PC-9 (cell line): ENCODE measurements at regions of chr22 and their contacts with region 1.

Region 1: DNA sequence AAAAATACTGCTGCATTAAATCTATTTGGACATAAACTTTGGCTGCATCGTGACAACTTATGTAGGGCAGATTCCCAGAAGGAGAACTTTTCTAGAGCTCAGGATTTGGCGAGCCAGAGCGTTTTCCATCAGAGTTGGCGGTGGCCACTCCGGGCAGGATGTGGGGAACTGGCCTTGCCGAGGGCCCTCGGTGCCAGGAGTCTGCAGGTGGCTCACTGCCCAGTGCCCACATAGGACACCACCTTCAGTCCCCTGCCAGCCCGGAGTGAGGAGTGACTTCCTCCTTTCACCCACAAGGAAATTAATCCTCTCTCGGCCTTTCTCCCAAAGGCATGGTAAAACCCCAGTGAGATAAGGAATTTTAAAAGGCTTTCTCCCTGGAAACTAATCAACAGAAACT is 1.6 kb upstream of the LGALS2 start:
- DNase-seq: peak; percentile 69 to 70
- H3K4me3 ChIP-seq: no peak overlapping the region; the same call in 1 of the 2 replicates
- H3K27ac ChIP-seq: peak overlapping the region; percentile 52
- H3K4me1 ChIP-seq: peaks cover 15% of the 10 kb centered on the region
- H3K27me3 ChIP-seq: no peaks in the 10 kb centered on the region
- CTCF ChIP-seq: no peak

Region 2: DNA sequence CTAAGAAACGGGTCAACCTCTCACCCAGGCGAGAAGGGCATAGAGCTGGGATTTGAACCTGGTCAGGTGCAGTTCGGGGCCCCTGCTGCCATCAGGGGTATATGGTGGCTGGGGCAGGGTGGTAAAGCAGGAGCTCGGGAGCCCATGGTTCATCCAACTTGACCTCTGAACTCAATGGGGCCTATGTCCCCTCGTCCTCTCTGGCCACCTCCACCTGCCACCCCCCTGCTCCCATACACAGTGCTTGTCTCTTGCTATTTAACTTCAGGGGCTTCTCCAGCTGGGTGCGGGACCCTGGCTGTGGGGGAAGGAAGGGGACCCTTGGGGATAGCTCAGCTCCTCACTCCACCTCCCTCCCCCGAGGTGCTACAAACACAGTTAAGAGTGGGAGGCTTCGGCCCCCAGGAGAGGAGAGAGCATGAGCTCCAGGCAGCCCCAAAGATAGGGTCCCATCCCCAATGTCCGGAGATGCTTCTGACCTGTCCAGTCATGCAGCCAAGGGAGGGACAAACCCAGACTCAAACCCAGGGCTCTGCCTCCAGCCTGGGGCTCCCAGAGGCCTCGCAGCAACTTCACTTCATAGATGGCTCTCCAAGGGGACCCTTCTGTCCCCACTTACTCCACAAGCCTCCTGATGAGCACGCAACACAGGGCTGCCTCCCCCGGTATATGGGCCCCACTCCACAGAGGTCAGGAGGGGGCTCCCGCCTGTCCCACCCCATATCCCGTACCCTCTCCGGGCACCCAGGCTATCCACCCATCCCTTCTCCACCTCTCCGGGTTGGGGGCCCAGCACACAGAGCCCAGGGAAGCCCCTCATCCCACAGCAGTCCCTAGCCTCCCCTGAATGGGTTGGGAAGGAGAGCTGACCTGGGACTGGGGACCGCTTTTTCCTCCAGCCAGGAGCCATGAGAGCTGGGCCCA is 432.5 kb before region 1 on chr22:
- CTCF ChIA-PET with region 1: interaction called, 12 read pairs
- POLR2A ChIA-PET with region 1: no interaction called
- intact Hi-C with region 1: no loop called
- DNase-seq: no peak
- H3K4me3 ChIP-seq: no peak overlapping the region
- H3K27ac ChIP-seq: no peak overlapping the region
- H3K4me1 ChIP-seq: no peaks in the 10 kb centered on the region
- H3K27me3 ChIP-seq: no peaks in the 10 kb centered on the region
- CTCF ChIP-seq: no peak

Region 3: DNA sequence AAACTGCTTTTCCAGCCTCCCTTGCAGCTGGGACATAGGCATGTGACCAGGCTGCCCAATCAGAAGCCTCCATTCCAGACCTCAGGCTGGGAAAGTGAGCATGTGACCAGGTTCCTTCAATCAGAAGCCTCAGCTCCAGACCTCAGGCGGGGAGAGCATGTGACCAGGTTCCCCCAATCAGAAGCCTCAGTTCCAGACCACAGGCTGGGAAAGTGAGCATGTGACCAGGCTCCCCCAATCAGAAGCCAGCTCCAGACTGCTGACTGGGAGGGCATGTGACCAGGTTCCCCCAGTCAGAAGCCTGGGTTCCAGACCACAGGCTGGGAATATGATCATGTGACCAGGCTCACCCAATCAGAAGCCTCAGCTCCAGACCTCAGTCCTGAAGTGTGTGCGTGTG is 420.1 kb before region 1 on chr22:
- CTCF ChIA-PET with region 1: interaction called, 14 read pairs
- POLR2A ChIA-PET with region 1: no interaction called
- intact Hi-C with region 1: no loop called
- DNase-seq: peak in 1 of 2 experiments; percentile 53
- H3K4me3 ChIP-seq: no peak overlapping the region
- H3K27ac ChIP-seq: no peak overlapping the region
- H3K4me1 ChIP-seq: no peaks in the 10 kb centered on the region
- H3K27me3 ChIP-seq: no peaks in the 10 kb centered on the region
- CTCF ChIP-seq: no peak

Region 4: GRCh38 chr22:37999956-38000272 is 418.4 kb after region 1 on chr22:
- CTCF ChIA-PET with region 1: no interaction called
- POLR2A ChIA-PET with region 1: interaction called, 21 read pairs
- intact Hi-C with region 1: no loop called
- DNase-seq: peak; percentile 82 to 91
- H3K4me3 ChIP-seq: no peak overlapping the region
- H3K27ac ChIP-seq: peak overlapping the region; percentile 57
- H3K4me1 ChIP-seq: peaks cover 32% of the 10 kb centered on the region
- H3K27me3 ChIP-seq: no peaks in the 10 kb centered on the region
- CTCF ChIP-seq: no peak